HEK293 (cell line): ENCODE measurements at regions of chr1 and their contacts with region 1.

Region 1: GRCh38 chr1:24635195-24635843 is 7.8 kb upstream of the SRRM1 start:
- H3K4me3 ChIP-seq: no peak overlapping the region
- H3K27ac ChIP-seq: no peak overlapping the region
- H3K4me1 ChIP-seq: no peaks in the 10 kb centered on the region
- CTCF ChIP-seq: peak; percentile 50; the same call in 1 of the 2 replicates

Region 2: GRCh38 chr1:24594154-24594553 is 41.2 kb before region 1 on chr1:
- CTCF ChIA-PET with region 1: interaction called, 13 read pairs
- POLR2A ChIA-PET with region 1: no interaction called
- H3K4me3 ChIP-seq: no peak overlapping the region
- H3K27ac ChIP-seq: no peak overlapping the region
- H3K4me1 ChIP-seq: peaks cover 4% of the 10 kb centered on the region
- CTCF ChIP-seq: no peak